ENCODE measurements at regions of chr1 and their contacts with region 1.

Region 1: DNA sequence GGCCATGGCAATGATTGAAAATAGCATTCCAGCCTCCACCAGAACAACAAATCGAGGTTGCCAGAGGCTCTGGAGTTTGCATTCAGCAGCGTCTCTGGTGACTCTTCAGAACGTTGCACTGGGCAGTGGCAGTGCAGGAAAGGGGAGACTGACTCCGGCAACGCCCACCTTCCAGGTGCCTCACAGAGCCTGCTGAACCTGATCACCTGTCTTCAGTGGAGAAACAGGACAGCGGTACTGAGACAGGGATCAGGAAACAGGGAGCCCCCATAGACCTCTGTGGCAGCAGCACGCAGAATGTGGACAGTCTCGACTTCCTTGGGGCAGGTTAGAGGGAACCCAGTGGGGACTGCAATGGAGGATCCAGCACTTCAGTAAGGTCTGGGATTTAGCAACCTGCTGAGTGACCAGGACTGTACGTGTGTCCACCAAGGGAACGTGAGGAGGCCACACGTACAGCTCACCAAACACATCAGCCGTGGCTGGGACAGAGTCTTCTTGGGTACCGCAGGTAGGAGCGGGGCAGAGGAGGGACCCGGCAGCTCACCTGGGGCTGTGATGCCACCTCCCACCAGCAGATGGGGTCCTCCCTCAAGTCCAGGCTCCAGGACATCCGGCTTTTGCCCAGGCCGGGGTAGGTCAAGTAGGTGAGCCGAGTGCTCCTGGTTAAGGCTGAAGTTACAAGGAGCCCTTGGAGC is 128.6 kb downstream of the PRDM2 start:
- DNase-seq: peak; percentile 88
- ATAC-seq: peak; percentile 99
- H3K4me3 Mint-ChIP-seq: no peak overlapping the region
- H3K27ac Mint-ChIP-seq: no peak overlapping the region
- H3K4me1 Mint-ChIP-seq: peaks cover 3% of the 10 kb centered on the region; the same call in 1 of the 2 replicates
- H3K27me3 Mint-ChIP-seq: peaks cover 18% of the 10 kb centered on the region; the same call in 1 of the 2 replicates
- CTCF ChIP-seq: peak; percentile 76

Region 2: DNA sequence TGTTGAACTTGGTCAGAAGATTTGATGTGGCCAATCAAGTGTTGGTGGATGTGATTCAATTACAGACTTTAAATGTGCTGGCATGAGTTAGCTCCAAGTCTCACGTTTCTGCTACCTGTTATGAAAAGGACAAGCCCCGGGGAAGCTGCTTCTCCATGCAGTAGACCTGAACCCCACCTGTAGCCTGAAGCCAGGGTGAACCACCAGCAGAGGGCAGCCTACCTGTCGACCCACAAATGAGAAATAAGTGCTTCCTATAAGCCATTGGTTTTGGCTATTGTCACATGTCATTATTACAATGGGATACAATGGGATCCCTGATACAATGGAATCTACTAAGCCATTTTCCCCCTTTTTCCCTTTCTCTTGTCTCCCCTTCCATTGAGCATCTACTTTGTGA is 101.5 kb after region 1 on chr1:
- CTCF ChIA-PET with region 1: interaction called, 10 read pairs
- POLR2A ChIA-PET with region 1: no interaction called
- DNase-seq: peak; percentile 73
- ATAC-seq: peak; percentile 93
- H3K4me3 Mint-ChIP-seq: no peak overlapping the region
- H3K27ac Mint-ChIP-seq: no peak overlapping the region
- H3K4me1 Mint-ChIP-seq: no peaks in the 10 kb centered on the region
- H3K27me3 Mint-ChIP-seq: peaks cover 43% of the 10 kb centered on the region
- CTCF ChIP-seq: peak; percentile 20; the same call in 1 of the 2 replicates

Region 3: GRCh38 chr1:13950637-13951036 is 122.0 kb after region 1 on chr1:
- CTCF ChIA-PET with region 1: interaction called, 32 read pairs
- POLR2A ChIA-PET with region 1: no interaction called
- DNase-seq: peak; percentile 75
- ATAC-seq: peak; percentile 99
- H3K4me3 Mint-ChIP-seq: no peak overlapping the region
- H3K27ac Mint-ChIP-seq: no peak overlapping the region
- H3K4me1 Mint-ChIP-seq: no peaks in the 10 kb centered on the region
- H3K27me3 Mint-ChIP-seq: peaks cover 22% of the 10 kb centered on the region
- CTCF ChIP-seq: peak; percentile 61

Region 4: DNA sequence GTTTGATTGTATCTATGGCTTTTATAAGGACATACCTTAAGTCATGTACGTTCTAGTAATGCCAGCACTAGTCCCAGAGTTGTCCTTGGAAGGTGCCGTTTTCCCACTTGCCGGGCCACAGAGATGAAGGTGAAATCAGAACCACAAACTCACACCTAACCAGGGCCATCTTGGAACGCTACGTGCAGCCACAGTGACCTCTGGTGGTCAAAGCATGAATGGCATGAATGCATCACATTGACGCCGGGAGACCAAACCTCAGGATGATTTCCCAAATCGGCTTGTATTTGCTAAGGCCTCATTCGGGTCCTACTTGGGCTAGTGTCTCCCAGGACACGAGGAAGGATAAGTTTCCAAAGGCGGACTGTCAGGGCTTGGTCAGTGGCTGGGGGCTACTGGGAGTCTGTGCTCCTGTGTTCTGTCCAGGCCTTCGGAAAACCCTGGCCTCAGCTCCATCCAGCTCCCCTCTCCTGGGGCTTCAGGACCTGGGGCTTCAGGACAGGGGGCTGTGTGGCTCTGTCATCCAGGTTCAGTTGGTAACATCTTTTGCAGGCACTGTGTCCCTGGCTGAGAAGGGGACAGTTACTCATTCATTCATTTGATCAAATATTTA is 131.9 kb after region 1 on chr1:
- CTCF ChIA-PET with region 1: interaction called, 28 read pairs
- POLR2A ChIA-PET with region 1: no interaction called
- DNase-seq: peak; percentile 82
- ATAC-seq: peak; percentile 89
- H3K4me3 Mint-ChIP-seq: no peak overlapping the region
- H3K27ac Mint-ChIP-seq: no peak overlapping the region
- H3K4me1 Mint-ChIP-seq: no peaks in the 10 kb centered on the region; the same call in 1 of the 2 replicates
- H3K27me3 Mint-ChIP-seq: peaks cover 19% of the 10 kb centered on the region
- CTCF ChIP-seq: peak; percentile 96

Measured in WTC11 (cell line).